ENCODE measurements at regions of chr5 and their contacts with region 1.

Region 1: GRCh38 chr5:139711067-139711905 is 63.1 kb downstream of the CXXC5 start:
- DNase-seq: peak in 1 of 2 experiments; percentile 82
- H3K4me3 ChIP-seq: peak overlapping the region; percentile 40 to 79 (median 54)
- H3K27ac ChIP-seq: 0 out of 2 replicates have a peak overlapping the region, but pooled peaks have one; percentile 14
- H3K4me1 ChIP-seq: peaks cover 13 to 34% (median 24%) of the 10 kb centered on the region in 4 experiments
- H3K27me3 ChIP-seq: peaks cover 0 to 11% (median 9%) of the 10 kb centered on the region in 4 experiments; a peak in 4 of 7 replicates
- CTCF ChIP-seq: peak in 2 of 3 experiments; percentile 35 to 36; a peak in 3 of 4 replicates
- EP300 ChIP-seq: 0 out of 3 replicates have a peak, but pooled peaks of 1 of the 2 experiments have one; percentile 29
- POLR2A ChIP-seq: peak in 1 of 2 experiments; percentile 40; a peak in 1 of 3 replicates
- RAD21 ChIP-seq: peak; percentile 28 to 61; a peak in 3 of 4 replicates

Region 2: GRCh38 chr5:139651853-139652787 is 59.2 kb before region 1 on chr5:
- CTCF ChIA-PET with region 1: interaction called, 3 read pairs
- POLR2A ChIA-PET with region 1: interaction called, 72 read pairs
- DNase-seq: peak in 1 of 2 experiments; percentile 90
- H3K4me3 ChIP-seq: peak overlapping the region in 3 of 4 experiments; percentile 2 to 90 (median 14); a peak in 5 of 8 replicates
- H3K27ac ChIP-seq: no peak overlapping the region
- H3K4me1 ChIP-seq: peaks cover 20 to 53% (median 50%) of the 10 kb centered on the region in 4 experiments
- H3K27me3 ChIP-seq: peaks cover 0 to 4% (median 0%) of the 10 kb centered on the region in 4 experiments; a peak in 2 of 7 replicates
- CTCF ChIP-seq: no peak
- EP300 ChIP-seq: no peak
- POLR2A ChIP-seq: no peak
- RAD21 ChIP-seq: no peak

Region 3: GRCh38 chr5:139670369-139671095 is 40.8 kb before region 1 on chr5:
- CTCF ChIA-PET with region 1: interaction called, 19 read pairs
- POLR2A ChIA-PET with region 1: interaction called, 4 read pairs
- DNase-seq: no peak
- H3K4me3 ChIP-seq: no peak overlapping the region
- H3K27ac ChIP-seq: no peak overlapping the region
- H3K4me1 ChIP-seq: peaks cover 9 to 55% (median 43%) of the 10 kb centered on the region in 4 experiments
- H3K27me3 ChIP-seq: no peaks in the 10 kb centered on the region
- CTCF ChIP-seq: peak in 1 of 3 experiments; percentile 50; a peak in 1 of 4 replicates
- EP300 ChIP-seq: no peak
- POLR2A ChIP-seq: no peak
- RAD21 ChIP-seq: no peak

Region 4: DNA sequence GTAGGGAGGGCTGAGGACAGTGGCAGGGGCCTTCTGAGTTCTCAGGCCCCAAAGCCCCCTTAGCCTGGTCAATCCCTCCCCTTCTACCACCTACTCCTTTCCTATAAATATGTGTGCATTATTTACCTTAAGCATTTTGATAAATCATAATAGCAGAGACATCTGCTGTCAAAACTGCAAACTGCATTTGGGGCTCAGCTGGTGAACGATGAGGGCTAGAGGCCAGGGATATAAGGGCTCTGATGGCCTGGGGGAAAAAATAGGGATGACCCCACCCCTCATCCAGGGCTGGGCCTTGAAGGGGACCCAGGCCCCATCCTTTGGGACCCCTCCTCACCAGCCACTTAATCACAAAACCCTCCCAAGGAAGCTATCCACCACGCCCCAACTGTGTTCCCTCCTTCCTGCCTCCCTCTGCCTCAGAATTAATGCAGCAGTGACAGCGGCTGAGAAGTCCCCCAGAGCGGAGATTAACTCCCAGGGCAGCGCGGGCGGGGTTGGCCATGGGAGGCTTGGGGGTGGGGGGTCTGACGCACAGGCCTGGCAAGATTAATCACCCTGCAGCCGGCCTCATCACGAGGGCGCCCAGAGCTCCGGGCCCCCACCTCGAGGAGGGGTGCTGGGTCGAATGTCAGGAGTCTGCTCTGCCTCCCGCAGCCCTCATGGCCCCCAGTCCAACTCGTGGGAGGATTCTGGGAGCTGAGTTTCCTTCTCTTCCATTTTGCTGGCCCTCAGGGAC is 21.1 kb before region 1 on chr5:
- CTCF ChIA-PET with region 1: interaction called, 18 read pairs
- POLR2A ChIA-PET with region 1: interaction called, 136 read pairs
- DNase-seq: no peak
- H3K4me3 ChIP-seq: no peak overlapping the region
- H3K27ac ChIP-seq: no peak overlapping the region
- H3K4me1 ChIP-seq: peaks cover 27 to 51% (median 43%) of the 10 kb centered on the region in 4 experiments
- H3K27me3 ChIP-seq: peaks cover 0 to 5% (median 0%) of the 10 kb centered on the region in 4 experiments; a peak in 3 of 7 replicates
- CTCF ChIP-seq: no peak
- EP300 ChIP-seq: no peak
- POLR2A ChIP-seq: no peak
- RAD21 ChIP-seq: 0 out of 4 replicates have a peak, but pooled peaks of 1 of the 2 experiments have one; percentile 19

Region 5: GRCh38 chr5:139725073-139725830 is 14.0 kb after region 1 on chr5:
- CTCF ChIA-PET with region 1: interaction called, 13 read pairs
- POLR2A ChIA-PET with region 1: interaction called, 10 read pairs
- DNase-seq: no peak
- H3K4me3 ChIP-seq: no peak overlapping the region
- H3K27ac ChIP-seq: no peak overlapping the region
- H3K4me1 ChIP-seq: no peaks in the 10 kb centered on the region
- H3K27me3 ChIP-seq: no peaks in the 10 kb centered on the region
- CTCF ChIP-seq: no peak
- EP300 ChIP-seq: no peak
- POLR2A ChIP-seq: no peak
- RAD21 ChIP-seq: no peak

Region 6: GRCh38 chr5:139740138-139740991 is 29.1 kb after region 1 on chr5:
- CTCF ChIA-PET with region 1: interaction called, 29 read pairs
- POLR2A ChIA-PET with region 1: interaction called, 76 read pairs
- DNase-seq: no peak
- H3K4me3 ChIP-seq: no peak overlapping the region
- H3K27ac ChIP-seq: no peak overlapping the region
- H3K4me1 ChIP-seq: peaks cover 0 to 32% (median 22%) of the 10 kb centered on the region in 4 experiments; a peak in 6 of 7 replicates
- H3K27me3 ChIP-seq: peaks cover 0 to 7% (median 3%) of the 10 kb centered on the region in 4 experiments; a peak in 4 of 7 replicates
- CTCF ChIP-seq: no peak
- EP300 ChIP-seq: no peak
- POLR2A ChIP-seq: no peak
- RAD21 ChIP-seq: no peak

Region 7: DNA sequence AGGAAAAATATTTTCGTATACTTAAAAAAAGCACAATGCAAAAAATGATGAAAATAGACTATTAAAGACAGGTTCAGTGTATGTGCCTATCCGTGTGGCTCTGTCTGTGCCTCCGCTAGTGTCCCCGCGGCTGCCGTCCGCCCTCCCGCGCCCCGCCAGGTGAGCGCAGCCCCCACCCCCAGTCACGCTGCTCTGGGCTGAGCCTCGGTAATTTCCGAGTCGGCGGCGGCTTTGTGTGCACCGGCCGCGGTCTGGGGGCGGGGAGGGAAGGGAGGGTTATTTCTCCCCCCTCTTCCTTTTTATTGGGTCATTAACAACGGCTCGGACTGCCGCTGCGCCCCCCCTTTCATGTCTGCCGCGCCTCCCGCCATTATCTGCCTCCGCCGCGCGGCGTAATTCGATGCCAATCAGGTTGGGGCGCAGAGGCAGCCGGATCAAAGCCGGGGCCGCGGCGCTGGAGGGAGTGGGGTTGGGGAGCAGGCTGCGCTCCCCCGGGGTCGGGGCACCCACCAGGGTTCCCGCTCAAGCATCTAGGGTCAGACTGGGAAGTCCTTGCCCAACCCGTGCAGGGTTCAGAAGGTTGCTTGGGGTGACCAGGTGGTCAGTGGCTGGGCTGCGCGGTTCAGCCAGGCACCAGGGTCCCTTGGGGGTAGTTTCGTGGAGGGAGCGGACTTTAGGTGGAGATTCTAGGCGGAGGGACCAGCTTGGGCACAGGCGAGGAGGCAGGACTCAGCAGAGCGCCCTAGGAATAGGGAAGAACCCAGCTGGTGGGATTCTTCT is 44.8 kb after region 1 on chr5:
- CTCF ChIA-PET with region 1: interaction called, 10 read pairs
- POLR2A ChIA-PET with region 1: interaction called, 4 read pairs
- DNase-seq: peak in 1 of 2 experiments; percentile 82
- H3K4me3 ChIP-seq: peak overlapping the region; percentile 29 to 59 (median 39)
- H3K27ac ChIP-seq: no peak overlapping the region
- H3K4me1 ChIP-seq: peaks cover 4 to 12% (median 9%) of the 10 kb centered on the region in 4 experiments
- H3K27me3 ChIP-seq: peaks cover 17 to 69% (median 60%) of the 10 kb centered on the region in 4 experiments
- CTCF ChIP-seq: no peak
- EP300 ChIP-seq: no peak
- POLR2A ChIP-seq: no peak
- RAD21 ChIP-seq: no peak

Measured in H1 (cell line).